ENCODE measurements at regions of chr5 and their contacts with region 1.

Region 1: GRCh38 chr5:122091936-122092600 is 14.0 kb upstream of the LOX start:
- DNase-seq: peak; percentile 77
- H3K4me3 ChIP-seq: peak overlapping the region; percentile 19
- CTCF ChIP-seq: peak; percentile 21

Region 2: GRCh38 chr5:122175852-122176251 is 83.8 kb after region 1 on chr5:
- CTCF ChIA-PET with region 1: interaction called, 10 read pairs
- POLR2A ChIA-PET with region 1: no interaction called
- DNase-seq: no peak
- H3K4me3 ChIP-seq: no peak overlapping the region
- CTCF ChIP-seq: no peak

Region 3: DNA sequence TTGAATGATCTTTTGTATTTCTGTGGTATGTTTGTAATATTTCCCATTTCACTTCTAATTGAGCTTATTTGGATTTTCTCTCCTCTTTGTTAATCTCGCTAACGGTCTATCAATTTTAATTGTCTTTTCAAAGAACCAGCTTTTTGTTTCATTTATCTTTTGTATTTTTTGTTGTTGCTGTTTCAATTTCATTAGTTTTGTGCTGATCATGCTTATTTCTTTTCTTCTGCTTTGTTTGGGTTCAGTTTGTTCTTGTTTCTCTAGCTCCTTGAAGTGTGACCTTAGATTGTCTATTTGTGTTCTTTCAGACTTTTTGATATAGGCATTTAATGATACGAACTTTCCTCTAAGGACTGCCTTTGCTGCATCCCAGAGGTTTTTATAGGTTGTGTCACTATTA is 191.5 kb after region 1 on chr5:
- CTCF ChIA-PET with region 1: no interaction called
- POLR2A ChIA-PET with region 1: no interaction called
- DNase-seq: no peak
- H3K4me3 ChIP-seq: no peak overlapping the region
- CTCF ChIP-seq: no peak